Endothelial cell of umbilical vein (primary cell): ENCODE measurements at regions of chr5 and their contacts with region 1.

Region 1: DNA sequence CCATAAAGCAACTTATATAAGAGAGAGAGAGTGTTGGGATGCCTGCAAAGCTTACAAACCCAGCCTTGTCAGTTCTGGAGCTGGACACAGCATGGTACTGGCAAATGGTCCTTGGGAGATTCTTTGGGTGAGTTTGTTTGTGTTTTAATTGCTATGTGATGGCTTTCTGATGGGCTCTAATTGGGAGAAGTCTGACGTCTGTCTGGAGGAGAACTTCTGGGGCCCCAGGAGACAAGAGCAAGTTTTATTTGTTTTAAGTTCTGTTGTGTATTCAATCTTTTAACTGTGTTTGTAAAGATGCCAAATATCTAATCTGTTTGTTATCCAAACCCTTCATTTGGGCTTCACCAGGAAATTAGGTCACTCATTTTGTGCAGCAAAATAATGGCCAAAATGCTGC is 50.3 kb upstream of the AFAP1L1 start:
- DNase-seq: no peak
- H3K4me3 ChIP-seq: no peak overlapping the region
- H3K27ac ChIP-seq: no peak overlapping the region
- H3K4me1 ChIP-seq: peaks cover 8% of the 10 kb centered on the region
- H3K27me3 ChIP-seq: no peaks in the 10 kb centered on the region
- CTCF ChIP-seq: no peak
- POLR2A ChIP-seq: no peak

Region 2: GRCh38 chr5:148979104-148979723 is 242.1 kb before region 1 on chr5:
- CTCF ChIA-PET with region 1: no interaction called
- POLR2A ChIA-PET with region 1: no interaction called
- dilution Hi-C with region 1: no loop called
- intact Hi-C with region 1: no loop called
- DNase-seq: no peak
- H3K4me3 ChIP-seq: no peak overlapping the region
- H3K27ac ChIP-seq: no peak overlapping the region
- H3K4me1 ChIP-seq: peaks cover 28% of the 10 kb centered on the region
- H3K27me3 ChIP-seq: no peaks in the 10 kb centered on the region
- CTCF ChIP-seq: no peak
- POLR2A ChIP-seq: no peak

Region 3: GRCh38 chr5:149168276-149168906 is 52.9 kb before region 1 on chr5:
- CTCF ChIA-PET with region 1: no interaction called
- POLR2A ChIA-PET with region 1: no interaction called
- dilution Hi-C with region 1: no loop called
- intact Hi-C with region 1: no loop called
- DNase-seq: no peak
- H3K4me3 ChIP-seq: no peak overlapping the region
- H3K27ac ChIP-seq: no peak overlapping the region
- H3K4me1 ChIP-seq: peaks cover 19% of the 10 kb centered on the region
- H3K27me3 ChIP-seq: no peaks in the 10 kb centered on the region
- CTCF ChIP-seq: no peak
- POLR2A ChIP-seq: no peak

Region 4: DNA sequence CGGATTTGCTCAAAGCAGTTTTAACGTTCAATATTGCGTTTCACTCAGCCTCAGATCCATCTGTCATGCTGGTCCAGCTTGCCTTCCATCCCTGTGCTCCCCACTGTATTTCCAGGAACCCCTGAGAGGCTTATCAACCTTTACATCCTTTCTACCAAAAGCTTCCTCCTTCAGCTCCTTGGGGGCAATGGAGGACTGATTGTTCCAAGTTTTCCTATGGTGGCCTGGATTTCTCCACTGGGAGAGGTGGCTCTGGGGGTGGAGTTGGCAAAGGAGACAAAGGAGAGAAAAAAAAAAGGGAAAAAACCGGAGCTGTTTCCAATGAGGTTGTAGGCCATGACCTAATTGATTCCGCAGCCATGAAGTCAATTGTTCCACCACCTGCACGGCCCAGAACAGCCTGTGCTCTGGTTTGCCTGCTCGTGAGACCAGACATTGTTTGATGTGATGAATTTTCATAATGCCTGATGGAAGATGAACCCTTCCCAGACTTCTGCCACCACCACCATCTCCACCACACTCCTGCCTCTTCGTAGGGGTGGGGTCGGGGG is 25.9 kb before region 1 on chr5:
- CTCF ChIA-PET with region 1: no interaction called
- POLR2A ChIA-PET with region 1: no interaction called
- dilution Hi-C with region 1: no loop called
- intact Hi-C with region 1: loop called (anchors 2 kb)
- DNase-seq: no peak
- H3K4me3 ChIP-seq: no peak overlapping the region
- H3K27ac ChIP-seq: no peak overlapping the region
- H3K4me1 ChIP-seq: peaks cover 4% of the 10 kb centered on the region
- H3K27me3 ChIP-seq: no peaks in the 10 kb centered on the region
- CTCF ChIP-seq: no peak
- POLR2A ChIP-seq: no peak